ENCODE measurements at regions of chr2 and their contacts with region 1.

Region 1: DNA sequence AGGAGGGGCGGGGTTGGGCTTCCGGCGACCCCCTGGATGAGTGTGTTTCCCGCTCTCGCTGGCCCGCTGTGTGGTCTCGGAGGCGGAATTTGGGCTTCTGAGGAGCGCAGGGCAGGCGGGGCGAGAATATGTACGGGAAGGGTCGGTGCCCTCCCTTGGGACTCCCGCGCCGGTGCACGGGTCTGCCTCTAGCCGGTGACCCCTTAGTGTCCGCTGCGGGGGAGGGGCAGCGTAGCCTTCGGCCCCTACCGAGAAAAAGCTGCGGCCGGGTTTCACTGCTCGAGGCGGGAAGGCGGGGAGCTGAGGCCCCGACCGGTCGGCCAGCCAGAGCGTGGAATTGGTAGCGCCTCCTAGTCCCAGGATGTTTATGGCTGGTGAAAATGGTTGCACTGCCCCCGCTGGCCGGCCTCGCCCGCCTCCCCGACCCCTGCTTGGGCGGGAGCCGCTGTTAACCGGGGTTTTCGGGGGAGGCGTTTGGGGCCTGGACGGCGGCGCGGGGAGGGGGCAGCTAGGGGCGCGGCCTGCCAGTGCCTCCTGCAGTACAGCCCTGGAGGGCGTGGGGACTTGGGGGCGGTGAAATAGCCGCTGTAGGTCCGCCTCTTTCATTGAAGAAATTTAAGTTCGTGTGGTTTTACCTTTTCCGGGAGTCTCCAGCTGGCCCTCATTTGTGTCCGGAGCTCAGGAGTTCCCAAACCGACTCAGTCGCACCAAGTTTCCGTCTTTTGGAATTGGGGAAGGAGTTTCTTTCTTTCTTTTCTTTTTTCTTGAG is at the start of gene UGP2:
- DNase-seq: peak; percentile 82 to 94 (median 83)
- H3K4me3 ChIP-seq: peak within 1 kb of the TSS; percentile 63 to 85
- H3K4me3 Mint-ChIP-seq: peak within 1 kb of the TSS; percentile 96 to 100 (median 98)
- H3K27ac ChIP-seq: peak within 1 kb of the TSS; percentile 71
- H3K27ac Mint-ChIP-seq: peak within 1 kb of the TSS; percentile 95 to 100 (median 97)
- H3K4me1 ChIP-seq: peaks cover 44% of the 10 kb centered on the region
- H3K4me1 Mint-ChIP-seq: peaks cover 38 to 63% (median 51%) of the 10 kb centered on the region in 4 donors
- H3K27me3 ChIP-seq: no peaks in the 10 kb centered on the region
- H3K27me3 Mint-ChIP-seq: no peaks in the 10 kb centered on the region
- total RNA-seq, gene UGP2: 77.6 to 92.7 TPM

Region 2: GRCh38 chr2:62705007-62705829 is 1136.2 kb before region 1 on chr2 and contains the start of gene EHBP1:
- CTCF ChIA-PET with region 1: no interaction called
- POLR2A ChIA-PET with region 1: interaction called, 6 read pairs
- intact Hi-C with region 1: loop called (anchors 2 kb)
- DNase-seq: peak; percentile 97 to 99 (median 97)
- H3K4me3 ChIP-seq: peak within 1 kb of the TSS; percentile 80 to 94
- H3K4me3 Mint-ChIP-seq: peak within 1 kb of the TSS; percentile 86 to 96 (median 94)
- H3K27ac ChIP-seq: peak within 1 kb of the TSS; percentile 50
- H3K27ac Mint-ChIP-seq: peak within 1 kb of the TSS; percentile 86 to 97 (median 91)
- H3K4me1 ChIP-seq: peaks cover 43% of the 10 kb centered on the region
- H3K4me1 Mint-ChIP-seq: peaks cover 28 to 39% (median 31%) of the 10 kb centered on the region in 4 donors
- H3K27me3 ChIP-seq: no peaks in the 10 kb centered on the region
- H3K27me3 Mint-ChIP-seq: no peaks in the 10 kb centered on the region
- total RNA-seq, gene EHBP1: 26.8 to 31.9 TPM

Region 3: DNA sequence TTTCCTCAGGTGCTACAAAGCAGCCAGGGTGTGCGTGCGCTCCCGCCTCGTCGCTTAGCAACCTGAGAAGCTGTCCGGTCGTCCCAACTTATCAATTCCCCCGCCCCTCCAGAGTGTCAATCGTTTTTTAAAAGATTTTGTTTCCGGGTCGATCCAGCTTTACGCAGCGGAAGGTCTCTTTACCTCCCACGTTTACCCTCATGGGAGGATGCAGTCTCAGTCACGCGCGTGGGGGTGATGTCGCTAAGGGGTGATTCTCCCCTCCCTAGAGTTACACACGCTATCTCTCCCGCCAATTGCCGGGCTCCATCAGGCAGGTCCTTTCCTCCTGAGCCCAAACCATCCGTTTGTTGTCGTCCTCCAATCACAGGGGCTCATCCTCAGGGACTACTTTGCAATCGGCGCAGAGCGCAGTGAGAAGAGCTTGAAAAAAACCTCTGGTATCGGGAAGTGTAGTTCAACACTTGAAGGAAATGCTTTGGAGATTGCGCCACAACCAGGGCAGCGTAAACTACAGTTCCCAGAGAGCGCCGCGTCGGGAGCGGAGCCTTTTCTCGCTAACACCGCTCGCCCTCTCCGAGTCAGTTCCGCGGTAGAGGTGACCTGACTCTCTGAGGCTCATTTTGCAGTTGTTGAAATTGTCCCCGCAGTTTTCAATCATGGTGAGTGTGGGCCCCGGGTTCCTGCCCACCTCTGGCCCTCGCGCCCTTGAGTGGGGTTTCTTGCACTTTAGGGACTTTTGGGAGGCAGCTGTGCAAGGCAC is 252.9 kb before region 1 on chr2 and contains the starts of genes MDH1 and WDPCP:
- CTCF ChIA-PET with region 1: no interaction called
- POLR2A ChIA-PET with region 1: interaction called, 33 read pairs
- intact Hi-C with region 1: loop called (anchors 1 kb)
- DNase-seq: peak; percentile 93 to 99 (median 97)
- H3K4me3 ChIP-seq: peak within 1 kb of the TSS; percentile 78 to 96
- H3K4me3 Mint-ChIP-seq: peak within 1 kb of the TSS; percentile 89 to 96 (median 95)
- H3K27ac ChIP-seq: peak within 1 kb of the TSS; percentile 82
- H3K27ac Mint-ChIP-seq: peak within 1 kb of the TSS; percentile 92 to 99 (median 98)
- H3K4me1 ChIP-seq: peaks cover 32% of the 10 kb centered on the region
- H3K4me1 Mint-ChIP-seq: peaks cover 20 to 54% (median 43%) of the 10 kb centered on the region in 4 donors
- H3K27me3 ChIP-seq: no peaks in the 10 kb centered on the region
- H3K27me3 Mint-ChIP-seq: no peaks in the 10 kb centered on the region
- total RNA-seq, gene MDH1: 93.8 to 102 TPM
- total RNA-seq, gene WDPCP: 10.5 to 13.2 TPM

Region 4: GRCh38 chr2:63856303-63856603 is 14.8 kb after region 1 on chr2:
- CTCF ChIA-PET with region 1: interaction called, 37 read pairs
- POLR2A ChIA-PET with region 1: interaction called, 113 read pairs
- intact Hi-C with region 1: loop called (anchors 1 kb)
- DNase-seq: peak; percentile 67 to 86 (median 81)
- H3K4me3 ChIP-seq: no peak overlapping the region
- H3K4me3 Mint-ChIP-seq: peak overlapping the region; percentile 60 to 89 (median 74)
- H3K27ac ChIP-seq: peak overlapping the region; percentile 68
- H3K27ac Mint-ChIP-seq: peak overlapping the region; percentile 77 to 96 (median 93)
- H3K4me1 ChIP-seq: peaks cover 61% of the 10 kb centered on the region
- H3K4me1 Mint-ChIP-seq: peaks cover 45 to 65% (median 55%) of the 10 kb centered on the region in 4 donors
- H3K27me3 ChIP-seq: no peaks in the 10 kb centered on the region
- H3K27me3 Mint-ChIP-seq: no peaks in the 10 kb centered on the region

Region 5: DNA sequence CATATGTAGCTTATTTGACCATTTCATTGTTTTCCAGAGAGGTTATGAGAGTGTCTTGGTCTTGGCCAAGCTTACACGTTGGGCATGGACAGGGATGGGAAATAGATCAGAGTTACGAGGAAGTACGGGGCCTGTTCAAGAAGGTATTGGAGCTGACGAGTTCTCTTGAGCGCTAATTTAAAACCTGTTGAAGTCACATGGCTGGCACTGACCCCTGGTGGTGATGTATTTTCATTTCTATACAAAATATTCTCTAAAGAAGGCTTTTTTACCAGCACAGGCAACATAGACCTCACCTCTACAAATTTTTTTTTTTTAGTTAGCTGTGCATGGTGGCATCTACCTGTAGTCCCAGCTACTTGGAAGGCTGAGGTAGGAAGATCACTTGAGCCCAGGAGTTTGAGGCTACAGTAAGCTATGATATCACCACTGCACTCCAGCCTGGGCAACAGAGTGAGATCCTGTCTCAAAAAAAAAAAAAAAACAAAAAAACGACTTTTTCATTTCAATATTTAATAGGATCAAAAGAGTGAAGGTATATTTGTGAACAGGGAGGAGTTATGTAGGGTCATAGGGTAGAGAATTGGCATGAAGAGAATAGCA is 19.9 kb after region 1 on chr2:
- CTCF ChIA-PET with region 1: interaction called, 37 read pairs
- POLR2A ChIA-PET with region 1: interaction called, 113 read pairs
- intact Hi-C with region 1: loop called (anchors 1 kb)
- DNase-seq: peak; percentile 65 to 73 (median 67)
- H3K4me3 ChIP-seq: no peak overlapping the region
- H3K4me3 Mint-ChIP-seq: no peak overlapping the region
- H3K27ac ChIP-seq: no peak overlapping the region
- H3K27ac Mint-ChIP-seq: peak overlapping the region in 6 of 7 donors; percentile 10 to 78 (median 37)
- H3K4me1 ChIP-seq: peaks cover 23% of the 10 kb centered on the region
- H3K4me1 Mint-ChIP-seq: peaks cover 26 to 40% (median 29%) of the 10 kb centered on the region in 4 donors
- H3K27me3 ChIP-seq: no peaks in the 10 kb centered on the region
- H3K27me3 Mint-ChIP-seq: no peaks in the 10 kb centered on the region

Region 6: DNA sequence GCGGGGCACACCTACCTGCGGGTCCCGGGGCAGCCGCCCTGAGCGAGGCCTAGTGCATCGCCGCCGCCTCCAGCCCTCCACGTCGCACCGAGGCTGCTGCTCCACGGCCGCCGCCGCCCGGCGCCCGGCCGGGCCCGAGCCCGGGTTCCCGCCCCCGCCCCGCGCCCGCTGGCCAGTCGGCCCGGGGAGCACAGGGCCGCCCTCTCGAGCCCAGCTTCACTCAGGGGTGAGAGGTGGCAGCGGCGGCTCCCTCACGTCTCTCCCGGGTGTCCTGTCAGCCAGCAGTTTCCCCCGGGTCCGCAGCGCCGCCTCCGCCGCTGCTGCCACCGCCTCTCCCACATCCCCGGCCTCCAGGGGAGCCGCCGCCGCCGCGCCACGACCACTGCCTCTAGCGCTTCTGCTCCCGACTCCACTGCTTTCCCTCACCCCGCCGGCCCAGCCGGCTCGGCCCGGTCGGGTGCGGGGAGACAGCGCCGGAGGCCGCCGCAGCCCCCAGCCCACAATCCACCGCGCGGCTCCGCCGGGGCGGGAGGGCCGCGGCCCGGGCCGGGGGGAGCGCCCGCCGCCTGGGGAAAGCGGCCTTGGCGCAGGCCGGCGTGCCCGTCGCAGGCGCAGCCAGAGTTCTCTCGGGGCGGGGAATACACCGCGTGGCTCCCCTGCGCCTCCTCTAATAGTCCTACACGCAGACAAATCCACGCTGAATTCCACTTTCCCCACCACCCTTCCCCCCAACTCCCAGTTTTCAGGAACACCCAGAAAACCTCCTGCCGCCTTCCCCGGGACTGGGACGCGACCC is 177.7 kb after region 1 on chr2 and contains the start of gene VPS54:
- CTCF ChIA-PET with region 1: no interaction called
- POLR2A ChIA-PET with region 1: no interaction called
- intact Hi-C with region 1: loop called (anchors 5 kb)
- DNase-seq: peak; percentile 59 to 74 (median 63)
- H3K4me3 ChIP-seq: peak within 1 kb of the TSS; percentile 51 to 58
- H3K4me3 Mint-ChIP-seq: peak within 1 kb of the TSS; percentile 98 to 99 (median 99)
- H3K27ac ChIP-seq: peak within 1 kb of the TSS; percentile 72
- H3K27ac Mint-ChIP-seq: peak within 1 kb of the TSS; percentile 94 to 99 (median 98)
- H3K4me1 ChIP-seq: peaks cover 55% of the 10 kb centered on the region
- H3K4me1 Mint-ChIP-seq: peaks cover 34 to 51% (median 42%) of the 10 kb centered on the region in 4 donors
- H3K27me3 ChIP-seq: no peaks in the 10 kb centered on the region
- H3K27me3 Mint-ChIP-seq: no peaks in the 10 kb centered on the region
- total RNA-seq, gene VPS54: 15.2 to 16.4 TPM

Region 7: GRCh38 chr2:64101141-64101591 is 259.7 kb after region 1 on chr2:
- CTCF ChIA-PET with region 1: no interaction called
- POLR2A ChIA-PET with region 1: no interaction called
- intact Hi-C with region 1: no loop called
- DNase-seq: peak in 3 of 5 donors; percentile 19 to 25 (median 21)
- H3K4me3 ChIP-seq: no peak overlapping the region
- H3K4me3 Mint-ChIP-seq: peak overlapping the region in 7 of 8 donors; percentile 8 to 79 (median 59)
- H3K27ac ChIP-seq: no peak overlapping the region
- H3K27ac Mint-ChIP-seq: peak overlapping the region; percentile 24 to 86 (median 55)
- H3K4me1 ChIP-seq: peaks cover 44% of the 10 kb centered on the region
- H3K4me1 Mint-ChIP-seq: peaks cover 22 to 52% (median 30%) of the 10 kb centered on the region in 4 donors
- H3K27me3 ChIP-seq: no peaks in the 10 kb centered on the region
- H3K27me3 Mint-ChIP-seq: no peaks in the 10 kb centered on the region

Region 8: DNA sequence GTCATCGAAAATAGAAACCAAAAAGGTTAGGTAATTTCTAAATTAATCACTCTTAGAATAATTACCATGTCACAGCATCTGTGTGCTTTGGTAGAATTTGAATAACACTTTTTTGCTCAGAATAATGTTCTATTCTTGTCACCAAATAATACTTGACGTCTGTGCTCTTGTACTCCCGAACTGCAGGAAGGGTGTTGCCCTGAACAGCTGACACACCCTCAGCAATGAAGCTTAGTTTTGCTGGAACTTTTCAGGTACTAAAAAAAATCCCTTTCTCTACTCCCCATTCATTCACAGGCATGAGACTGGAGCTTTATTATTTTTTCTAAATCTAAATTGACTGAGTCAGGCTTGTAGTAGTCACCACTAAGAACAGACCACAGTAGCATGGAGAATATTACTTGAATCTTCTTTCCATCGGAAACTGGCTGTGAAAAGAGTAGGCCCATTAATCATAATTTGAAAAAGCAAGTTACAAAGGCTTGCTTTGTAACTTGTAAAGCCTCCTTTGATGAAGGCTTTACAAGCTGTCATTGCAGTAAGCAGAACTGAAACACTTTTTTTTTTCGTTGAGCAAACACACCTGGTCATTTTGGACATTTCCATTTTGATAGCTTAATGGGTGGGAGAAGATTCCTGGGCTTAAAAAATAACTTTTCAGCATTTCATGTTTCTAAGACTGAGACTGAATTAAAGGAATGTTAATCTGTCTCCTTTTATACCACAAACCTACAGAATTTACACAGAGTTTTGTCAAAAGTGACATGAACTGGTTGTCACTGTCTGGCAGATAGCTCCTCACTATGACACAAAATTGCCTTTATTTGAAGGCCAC is 373.1 kb after region 1 on chr2:
- CTCF ChIA-PET with region 1: no interaction called
- POLR2A ChIA-PET with region 1: no interaction called
- intact Hi-C with region 1: loop called (anchors 5 kb)
- DNase-seq: peak; percentile 63 to 76 (median 73)
- H3K4me3 ChIP-seq: peak overlapping the region in 1 of 2 donors; percentile 28
- H3K4me3 Mint-ChIP-seq: peak overlapping the region; percentile 58 to 89 (median 76)
- H3K27ac ChIP-seq: peak overlapping the region; percentile 51
- H3K27ac Mint-ChIP-seq: peak overlapping the region; percentile 87 to 94 (median 92)
- H3K4me1 ChIP-seq: peaks cover 43% of the 10 kb centered on the region
- H3K4me1 Mint-ChIP-seq: peaks cover 29 to 46% (median 42%) of the 10 kb centered on the region in 4 donors
- H3K27me3 ChIP-seq: no peaks in the 10 kb centered on the region
- H3K27me3 Mint-ChIP-seq: no peaks in the 10 kb centered on the region